Mammary epithelial cell (primary cell): ENCODE measurements at regions of chr11 and their contacts with region 1.

Region 1: DNA sequence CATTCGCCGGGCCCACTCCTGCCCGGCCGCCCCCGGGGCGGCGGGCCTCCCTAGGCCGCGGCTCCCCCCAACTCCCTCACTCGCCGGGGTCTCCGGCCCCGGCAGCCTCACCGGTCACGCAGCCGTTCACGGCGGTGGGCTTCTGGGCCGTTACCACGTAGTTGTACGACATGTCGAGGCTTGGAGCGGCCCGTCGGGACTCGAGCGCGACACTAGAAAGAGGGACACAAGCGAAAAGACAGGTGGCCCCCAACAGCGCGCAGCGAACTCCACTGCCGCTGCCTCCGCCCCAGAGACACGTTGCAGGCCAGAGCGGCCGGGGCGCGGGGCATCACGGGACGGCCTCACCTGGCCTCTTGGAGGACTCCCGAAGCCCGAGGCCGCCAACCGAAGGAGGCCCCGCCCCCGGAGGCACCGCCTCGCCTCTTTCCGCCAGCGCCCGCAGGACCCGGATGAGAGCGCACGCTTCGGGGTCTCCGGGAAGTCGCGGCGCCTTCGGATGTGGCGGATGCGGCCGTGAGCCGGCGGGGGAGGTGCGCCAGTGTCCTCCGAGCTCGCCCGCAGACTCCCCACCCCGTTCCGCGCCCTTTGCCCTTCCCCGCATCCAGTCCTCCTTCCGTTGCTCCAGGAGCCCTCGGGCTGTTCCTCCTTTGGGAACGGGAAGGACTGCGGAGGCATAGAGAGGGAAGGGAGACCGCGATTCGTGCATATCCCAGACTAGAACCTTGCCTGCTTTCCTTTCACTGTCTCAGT is at the starts of genes DDB1 and TKFC:
- DNase-seq: peak; percentile 92
- H3K4me3 ChIP-seq: peak within 1 kb of the TSS; percentile 69 to 93 (median 91)
- H3K27ac ChIP-seq: peak within 1 kb of the TSS; percentile 84
- H3K4me1 ChIP-seq: peaks cover 39% of the 10 kb centered on the region
- H3K27me3 ChIP-seq: no peaks in the 10 kb centered on the region
- CTCF ChIP-seq: no peak
- total RNA-seq, gene DDB1: 214 to 230 TPM
- total RNA-seq, gene TKFC: 30.0 to 65.3 TPM

Region 2: DNA sequence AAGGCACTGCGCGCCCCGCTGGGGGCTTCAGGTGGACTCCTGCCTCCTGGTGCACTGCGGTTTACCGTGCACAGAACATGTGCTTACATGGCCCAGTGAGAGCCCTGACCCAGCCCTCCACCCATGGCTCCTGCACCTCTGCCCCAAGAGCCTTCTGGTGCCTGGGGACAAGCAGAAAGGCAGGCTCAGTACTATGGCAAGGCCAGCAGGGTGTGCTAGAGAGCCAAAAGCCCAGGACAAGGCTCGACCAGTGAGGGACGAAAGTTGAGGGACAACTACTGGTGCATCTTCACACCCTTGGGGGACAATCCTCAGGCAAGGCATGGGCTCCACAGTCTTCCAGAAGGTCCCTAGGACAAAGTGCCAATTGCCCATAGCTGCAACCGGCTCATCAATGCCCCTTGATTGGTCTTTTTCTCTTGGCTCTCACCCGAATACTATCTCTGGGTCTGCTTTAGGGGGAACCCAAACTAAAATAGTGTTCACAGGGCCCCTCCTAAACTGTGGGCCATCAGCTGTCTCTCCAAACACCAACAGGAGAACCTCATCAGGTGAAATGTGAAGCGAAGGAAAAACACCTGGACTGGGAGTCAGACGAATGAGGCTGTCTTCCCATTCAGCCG is 78.5 kb before region 1 on chr11:
- CTCF ChIA-PET with region 1: no interaction called
- dilution Hi-C with region 1: no loop called
- in situ Hi-C with region 1: no loop called
- intact Hi-C with region 1: loop called (anchors 1 kb)
- DNase-seq: peak; percentile 39
- H3K4me3 ChIP-seq: no peak overlapping the region
- H3K27ac ChIP-seq: no peak overlapping the region
- H3K4me1 ChIP-seq: no peaks in the 10 kb centered on the region
- H3K27me3 ChIP-seq: no peaks in the 10 kb centered on the region
- CTCF ChIP-seq: peak; percentile 97

Region 3: DNA sequence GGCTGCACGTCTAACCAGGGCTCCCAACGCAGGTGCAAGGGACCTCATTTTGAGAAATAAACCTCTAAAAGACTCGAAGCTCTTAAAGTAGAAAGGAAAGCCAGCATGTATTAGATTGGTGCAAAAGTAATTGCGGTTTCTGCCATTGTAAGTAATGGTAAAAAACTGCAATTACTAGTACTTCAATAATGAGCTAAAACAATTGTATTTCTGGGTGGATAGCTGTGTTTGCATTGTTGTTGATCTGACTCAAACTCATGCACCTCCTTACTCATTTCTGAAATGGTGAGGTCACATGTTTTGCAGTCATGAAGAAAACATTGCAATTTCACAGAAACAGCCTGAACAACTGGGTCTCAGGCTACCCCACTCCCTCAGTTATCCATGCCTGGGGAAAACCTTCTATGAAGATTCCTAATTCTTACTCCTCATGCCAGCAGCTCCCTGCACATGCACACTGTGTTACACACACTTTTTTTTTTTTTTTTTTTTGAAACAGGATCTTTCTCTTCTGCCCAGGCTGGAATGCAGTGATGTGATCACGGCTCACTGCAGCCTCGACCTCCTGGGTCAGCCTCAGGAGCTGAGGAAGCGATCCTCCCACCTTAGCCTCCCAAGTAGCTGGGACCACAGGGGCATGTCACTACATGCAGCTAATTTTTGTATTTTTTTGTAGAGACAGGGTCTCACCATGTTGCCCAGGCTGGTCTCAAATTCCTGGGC is 62.5 kb before region 1 on chr11:
- CTCF ChIA-PET with region 1: no interaction called
- dilution Hi-C with region 1: no loop called
- in situ Hi-C with region 1: no loop called
- intact Hi-C with region 1: no loop called
- DNase-seq: peak; percentile 44
- H3K4me3 ChIP-seq: no peak overlapping the region
- H3K27ac ChIP-seq: no peak overlapping the region
- H3K4me1 ChIP-seq: peaks cover 6% of the 10 kb centered on the region
- H3K27me3 ChIP-seq: no peaks in the 10 kb centered on the region
- CTCF ChIP-seq: no peak

Region 4: GRCh38 chr11:61347916-61348461 is 15.0 kb after region 1 on chr11:
- CTCF ChIA-PET with region 1: no interaction called
- dilution Hi-C with region 1: no loop called
- in situ Hi-C with region 1: no loop called
- intact Hi-C with region 1: loop called (anchors 1 kb)
- DNase-seq: no peak
- H3K4me3 ChIP-seq: no peak overlapping the region
- H3K27ac ChIP-seq: no peak overlapping the region
- H3K4me1 ChIP-seq: peaks cover 14% of the 10 kb centered on the region
- H3K27me3 ChIP-seq: no peaks in the 10 kb centered on the region
- CTCF ChIP-seq: no peak

Region 5: GRCh38 chr11:61361686-61362541 is 28.9 kb after region 1 on chr11 and contains the starts of genes CYB561A3 and TMEM138:
- CTCF ChIA-PET with region 1: interaction called, 7 read pairs
- dilution Hi-C with region 1: no loop called
- in situ Hi-C with region 1: no loop called
- intact Hi-C with region 1: loop called (anchors 1 kb)
- DNase-seq: peak; percentile 96
- H3K4me3 ChIP-seq: peak within 1 kb of the TSS; percentile 59 to 76 (median 67)
- H3K27ac ChIP-seq: peak within 1 kb of the TSS; percentile 77
- H3K4me1 ChIP-seq: peaks cover 13% of the 10 kb centered on the region
- H3K27me3 ChIP-seq: no peaks in the 10 kb centered on the region
- CTCF ChIP-seq: no peak
- total RNA-seq, gene CYB561A3: 65.8 to 74.8 TPM
- total RNA-seq, gene TMEM138: 40.2 to 81.9 TPM

Region 6: DNA sequence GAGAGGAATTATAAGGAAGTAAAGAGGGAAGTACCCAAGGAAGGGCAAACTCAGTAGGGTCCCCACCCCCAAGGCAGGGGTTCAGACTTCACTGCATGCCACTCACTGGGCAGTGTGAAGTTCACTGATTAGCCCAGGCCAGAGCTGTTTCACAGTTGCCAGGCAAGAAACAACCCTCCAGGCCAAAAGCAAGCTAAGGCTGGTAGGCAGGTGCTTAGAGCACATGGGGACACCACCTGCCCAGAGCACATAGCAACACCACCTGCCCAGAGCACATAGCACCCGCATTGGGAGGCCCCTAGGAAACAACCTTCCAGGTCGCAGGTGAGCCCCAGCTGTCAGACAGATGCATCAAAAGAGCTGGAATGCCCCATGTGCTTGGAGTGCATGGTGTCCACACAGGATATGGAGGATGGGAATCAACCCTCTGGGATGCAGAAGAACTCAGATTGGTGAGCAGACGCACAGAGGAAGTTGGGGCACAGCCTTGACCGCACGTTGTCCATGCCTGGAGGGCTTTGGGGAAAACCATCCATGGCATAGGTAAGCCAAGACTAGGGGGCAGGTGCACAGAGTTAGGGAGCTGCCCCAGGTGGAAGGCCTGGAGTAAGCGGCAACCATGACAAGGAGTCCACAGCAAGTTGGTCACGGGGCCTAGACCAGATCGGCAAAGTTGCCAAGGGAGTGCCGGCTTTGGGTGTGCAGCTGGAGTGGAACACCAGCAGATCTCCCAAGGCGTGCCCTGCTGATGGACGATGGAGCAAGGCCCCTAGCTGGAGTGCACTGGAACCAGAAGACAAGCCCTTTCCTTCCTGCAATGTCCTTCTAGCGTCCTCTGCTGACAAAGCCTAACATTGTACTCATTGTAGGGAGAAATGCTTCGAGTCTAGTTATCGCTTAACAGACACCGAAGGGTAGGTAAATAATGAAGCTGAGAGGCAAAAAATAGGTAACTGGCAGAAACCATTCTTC is 51.6 kb after region 1 on chr11:
- CTCF ChIA-PET with region 1: interaction called, 32 read pairs
- dilution Hi-C with region 1: no loop called
- in situ Hi-C with region 1: loop called (anchors 5 kb)
- intact Hi-C with region 1: loop called (anchors 1 kb)
- DNase-seq: no peak
- H3K4me3 ChIP-seq: no peak overlapping the region
- H3K27ac ChIP-seq: no peak overlapping the region
- H3K4me1 ChIP-seq: peaks cover 9% of the 10 kb centered on the region
- H3K27me3 ChIP-seq: no peaks in the 10 kb centered on the region
- CTCF ChIP-seq: peak; percentile 51 to 60

Region 7: DNA sequence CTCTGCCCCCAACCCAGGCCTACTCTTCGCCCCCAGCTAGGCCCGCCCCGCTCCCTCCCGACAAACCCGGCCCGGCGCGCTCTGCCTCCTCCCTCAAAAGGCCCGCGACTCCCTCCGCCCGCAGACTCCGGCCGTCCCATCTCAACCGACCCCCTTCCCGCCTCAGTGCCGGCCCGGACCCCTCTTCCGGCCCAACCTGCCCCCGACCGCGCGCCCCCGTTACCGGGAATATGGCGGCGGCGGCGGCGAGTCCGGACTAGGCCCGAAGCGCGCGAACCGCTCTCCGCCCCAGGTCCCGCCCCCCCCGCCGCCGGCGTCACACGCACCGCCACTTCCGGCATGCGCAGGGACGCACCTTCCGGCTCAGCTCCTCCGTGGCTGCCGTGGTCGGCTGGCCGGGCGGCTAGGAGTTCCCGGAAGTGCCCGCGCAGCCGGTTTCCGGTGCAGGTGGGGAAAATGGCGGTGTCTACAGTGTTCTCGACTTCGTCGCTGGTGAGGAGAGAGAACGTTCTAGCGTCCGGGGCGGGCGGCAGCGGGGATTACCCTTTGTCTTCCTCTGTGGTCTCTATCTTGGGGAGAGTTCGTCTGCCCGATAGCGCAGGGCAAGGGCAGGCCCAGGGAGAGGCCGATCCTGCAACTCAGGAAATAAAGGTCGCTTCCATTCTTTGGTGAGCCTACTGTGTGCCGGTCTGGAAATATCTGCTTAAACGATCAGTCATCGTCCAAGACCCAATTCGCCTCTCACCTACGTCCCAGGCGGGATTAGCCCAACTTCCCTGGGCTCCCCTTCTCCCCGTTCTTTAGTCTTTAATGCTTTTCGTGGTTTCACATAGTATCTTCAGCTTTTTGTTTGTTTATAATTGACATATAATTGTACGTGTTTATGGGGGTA is 97.0 kb after region 1 on chr11 and contains the starts of genes CPSF7 and SDHAF2:
- CTCF ChIA-PET with region 1: no interaction called
- dilution Hi-C with region 1: no loop called
- in situ Hi-C with region 1: no loop called
- intact Hi-C with region 1: loop called (anchors 5 kb)
- DNase-seq: peak; percentile 96
- H3K4me3 ChIP-seq: peak within 1 kb of the TSS; percentile 58 to 93 (median 78)
- H3K27ac ChIP-seq: peak within 1 kb of the TSS; percentile 77
- H3K4me1 ChIP-seq: peaks cover 23% of the 10 kb centered on the region
- H3K27me3 ChIP-seq: no peaks in the 10 kb centered on the region
- CTCF ChIP-seq: no peak
- total RNA-seq, gene CPSF7: 27.2 to 77.7 TPM
- total RNA-seq, gene SDHAF2: 21.7 to 48.2 TPM